ENCODE measurements at regions of chr7 and their contacts with region 1.

Region 1: GRCh38 chr7:87933945-87934698 is at the start of gene ADAM22:
- DNase-seq: peak; percentile 86 to 98 (median 96)

Region 2: DNA sequence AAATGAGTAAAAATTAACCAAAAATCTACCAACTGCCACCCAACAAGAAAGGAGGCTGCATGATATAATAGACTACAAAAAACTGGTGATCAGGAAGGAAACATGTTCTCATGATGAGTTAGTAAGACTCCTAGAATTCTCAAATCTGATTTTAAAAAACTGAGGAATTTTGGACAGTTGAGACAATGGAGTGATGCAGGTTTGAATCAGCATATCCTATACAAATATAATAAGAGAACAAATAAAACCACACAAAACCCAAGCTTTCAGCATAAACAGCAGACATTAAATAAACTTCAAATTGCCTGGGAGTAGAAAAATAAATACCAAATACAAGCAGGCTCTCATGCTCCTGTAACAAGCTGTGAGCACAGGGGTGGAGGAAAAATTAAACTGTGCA is 115.8 kb before region 1 on chr7:
- intact Hi-C with region 1: no loop called
- DNase-seq: no peak

Region 3: GRCh38 chr7:87876040-87876868 is 57.9 kb before region 1 on chr7 and contains the starts of genes DBF4 and SLC25A40:
- intact Hi-C with region 1: loop called (anchors 10 kb)
- DNase-seq: peak; percentile 80 to 97 (median 94)

Region 4: DNA sequence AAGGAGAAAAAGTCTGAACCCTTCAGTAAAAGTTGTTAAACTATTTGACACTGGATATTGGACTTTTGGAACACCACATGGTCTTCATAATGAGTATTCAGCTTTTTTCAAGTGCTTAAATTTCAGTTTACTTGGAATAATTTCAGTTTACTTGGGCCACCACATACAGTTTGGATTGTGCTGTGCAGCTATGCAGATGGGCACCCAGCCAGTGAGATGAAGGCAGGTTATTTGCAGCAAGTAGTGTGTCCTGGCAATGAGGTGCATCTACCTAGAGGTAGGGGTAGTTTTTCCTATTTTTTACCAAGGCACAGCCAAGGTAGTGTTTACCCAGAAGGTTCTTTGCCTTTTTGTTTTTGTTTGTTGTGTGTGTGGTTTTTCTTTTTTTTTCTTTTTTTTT is 24.0 kb before region 1 on chr7:
- intact Hi-C with region 1: no loop called
- DNase-seq: no peak

Region 5: GRCh38 chr7:88101769-88102168 is 167.6 kb after region 1 on chr7:
- intact Hi-C with region 1: loop called (anchors 10 kb)
- DNase-seq: no peak